Lower leg skin (tissue), 4 donors: ENCODE measurements at regions of chr11 and their contacts with region 1.

Region 1: GRCh38 chr11:22337596-22338485 is at the start of gene SLC17A6:
- DNase-seq: no peak
- H3K4me3 ChIP-seq: no peak within 1 kb of the TSS
- CTCF ChIP-seq: no peak
- POLR2A ChIP-seq: no peak
- total RNA-seq, gene SLC17A6: not detected

Region 2: GRCh38 chr11:22192642-22193347 is 145.0 kb before region 1 on chr11 and contains the start of gene ANO5:
- intact Hi-C with region 1: no loop called
- DNase-seq: peak; percentile 14 to 85
- H3K4me3 ChIP-seq: peak within 1 kb of the TSS; percentile 44
- CTCF ChIP-seq: no peak
- POLR2A ChIP-seq: no peak
- total RNA-seq, gene ANO5: 0.19 to 0.98 (median 0.71) TPM

Region 3: DNA sequence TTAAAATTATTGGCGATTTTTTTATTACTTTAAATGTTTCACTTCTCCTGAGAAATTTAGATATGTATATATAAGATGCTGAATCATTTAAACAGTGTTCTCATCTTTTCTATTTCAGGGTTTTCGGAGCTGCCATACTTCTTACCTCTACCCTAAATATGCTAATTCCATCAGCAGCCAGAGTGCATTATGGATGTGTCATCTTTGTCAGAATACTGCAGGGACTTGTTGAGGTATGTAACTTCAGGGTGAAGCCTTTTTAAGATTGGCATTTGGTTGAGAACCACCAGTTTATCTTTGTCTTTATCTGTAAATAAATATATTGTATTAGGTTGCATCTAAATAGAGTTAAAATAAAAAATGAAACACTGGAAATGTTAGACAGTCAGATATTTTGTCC is 21.5 kb after region 1 on chr11:
- intact Hi-C with region 1: no loop called
- DNase-seq: no peak
- H3K4me3 ChIP-seq: no peak overlapping the region
- CTCF ChIP-seq: no peak
- POLR2A ChIP-seq: no peak

Region 4: DNA sequence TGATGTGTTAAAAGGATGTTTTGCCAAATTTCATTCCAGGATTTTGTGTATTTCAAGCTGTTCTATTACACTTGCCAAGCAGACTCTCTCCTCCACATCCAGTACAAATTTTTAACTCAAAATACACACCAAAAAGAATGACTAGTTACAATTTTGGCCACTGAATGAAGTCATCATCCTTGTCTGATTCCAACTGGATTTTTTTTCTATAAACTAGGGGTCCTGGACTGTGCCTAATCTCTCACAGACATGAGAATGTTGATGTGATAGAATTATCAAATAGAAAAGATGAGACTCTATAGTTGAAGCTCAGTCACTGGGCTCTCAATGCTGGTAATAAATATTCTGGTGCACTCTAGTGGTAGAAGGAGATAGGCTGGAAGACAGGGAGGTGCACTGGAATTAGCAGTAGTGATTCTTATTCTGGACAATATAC is 202.0 kb after region 1 on chr11:
- intact Hi-C with region 1: loop called (anchors 5 kb)
- DNase-seq: no peak
- H3K4me3 ChIP-seq: no peak overlapping the region
- CTCF ChIP-seq: no peak
- POLR2A ChIP-seq: no peak